ENCODE measurements at regions of chr12 and their contacts with region 1.

Region 1: GRCh38 chr12:1644534-1645438 is 15.8 kb downstream of the WNT5B start:
- DNase-seq: no peak
- ATAC-seq: no peak
- H3K4me3 ChIP-seq: no peak overlapping the region
- H3K27ac ChIP-seq: no peak overlapping the region
- H3K4me1 ChIP-seq: peaks cover 16 to 26% of the 10 kb centered on the region in 2 experiments
- H3K27me3 ChIP-seq: no peaks in the 10 kb centered on the region
- CTCF ChIP-seq: no peak
- EP300 ChIP-seq: no peak
- POLR2A ChIP-seq: no peak
- RAD21 ChIP-seq: no peak

Region 2: GRCh38 chr12:1787714-1788113 is 142.9 kb after region 1 on chr12:
- CTCF ChIA-PET with region 1: interaction called, 44 read pairs
- POLR2A ChIA-PET with region 1: interaction called, 5 read pairs
- in situ Hi-C with region 1: loop called (anchors 5 kb)
- intact Hi-C with region 1: no loop called
- DNase-seq: no peak
- ATAC-seq: no peak
- H3K4me3 ChIP-seq: no peak overlapping the region
- H3K27ac ChIP-seq: no peak overlapping the region
- H3K4me1 ChIP-seq: peaks cover 0 to 3% of the 10 kb centered on the region in 2 experiments; a peak in 3 of 5 replicates
- H3K27me3 ChIP-seq: no peaks in the 10 kb centered on the region
- CTCF ChIP-seq: no peak
- EP300 ChIP-seq: no peak
- POLR2A ChIP-seq: no peak
- RAD21 ChIP-seq: no peak

Measured in K562 (cell line).